B cell (primary cell): ENCODE measurements at regions of chr5 and their contacts with region 1.

Region 1: DNA sequence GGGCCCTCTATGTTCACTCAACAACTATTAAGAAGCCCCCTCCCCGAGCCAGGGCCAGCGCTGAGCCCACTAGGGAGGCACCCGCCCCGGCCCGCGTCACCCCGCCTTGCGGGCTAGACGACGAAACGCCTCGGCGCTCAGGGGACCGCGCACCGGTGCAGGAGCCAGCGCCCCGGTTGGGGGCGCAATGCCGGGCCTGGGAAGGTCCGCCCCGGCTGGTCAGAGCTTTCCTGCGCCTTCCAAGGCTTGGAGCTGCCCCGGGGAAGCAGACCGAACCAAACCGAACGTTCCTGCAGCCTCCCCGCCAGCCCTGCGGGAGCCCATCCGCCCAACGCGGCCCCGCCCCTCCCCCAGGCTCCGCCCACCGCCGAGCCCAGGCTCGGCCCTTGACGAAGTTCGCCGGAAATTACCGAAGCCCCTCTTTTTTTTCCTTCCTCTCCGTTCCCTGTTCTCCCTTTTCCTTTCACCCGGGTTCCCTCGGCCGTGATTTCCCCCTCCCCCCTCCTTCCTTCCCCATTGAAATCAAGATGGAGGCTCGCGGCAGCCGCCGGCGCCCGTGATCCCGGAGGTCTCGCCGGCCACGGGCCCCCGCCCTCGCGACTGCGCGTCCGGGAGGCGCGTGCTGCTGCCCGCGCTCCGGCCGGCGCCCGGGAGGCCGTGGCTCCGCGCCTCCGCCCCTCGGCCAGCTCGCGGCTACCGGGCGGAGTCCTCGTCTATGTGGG is at the start of gene TRIO:
- DNase-seq: peak; percentile 92
- ATAC-seq: peak; percentile 52
- H3K4me3 ChIP-seq: peak within 1 kb of the TSS; percentile 76 to 97 (median 93)
- H3K4me3 Mint-ChIP-seq: peak within 1 kb of the TSS; percentile 90
- H3K27ac ChIP-seq: peak within 1 kb of the TSS; percentile 92 to 95
- H3K27ac Mint-ChIP-seq: peak within 1 kb of the TSS; percentile 97
- H3K4me1 ChIP-seq: peaks cover 32 to 36% of the 10 kb centered on the region in 2 donors
- H3K4me1 Mint-ChIP-seq: peaks cover 33% of the 10 kb centered on the region
- H3K27me3 ChIP-seq: peaks cover 0 to 7% (median 1%) of the 10 kb centered on the region in 4 experiments
- H3K27me3 Mint-ChIP-seq: peaks cover 7% of the 10 kb centered on the region
- CTCF ChIP-seq: peak; percentile 75
- total RNA-seq, gene TRIO: 479 and 534 TPM in 2 replicates

Region 2: GRCh38 chr5:14054111-14054854 is 88.7 kb before region 1 on chr5:
- CTCF ChIA-PET with region 1: no interaction called
- POLR2A ChIA-PET with region 1: no interaction called
- intact Hi-C with region 1: no loop called
- DNase-seq: no peak
- ATAC-seq: no peak
- H3K4me3 ChIP-seq: no peak overlapping the region
- H3K4me3 Mint-ChIP-seq: no peak overlapping the region
- H3K27ac ChIP-seq: no peak overlapping the region
- H3K27ac Mint-ChIP-seq: no peak overlapping the region
- H3K4me1 ChIP-seq: no peaks in the 10 kb centered on the region
- H3K4me1 Mint-ChIP-seq: no peaks in the 10 kb centered on the region
- H3K27me3 ChIP-seq: peaks cover 0 to 16% (median 2%) of the 10 kb centered on the region in 4 experiments
- H3K27me3 Mint-ChIP-seq: peaks cover 17% of the 10 kb centered on the region
- CTCF ChIP-seq: no peak

Region 3: DNA sequence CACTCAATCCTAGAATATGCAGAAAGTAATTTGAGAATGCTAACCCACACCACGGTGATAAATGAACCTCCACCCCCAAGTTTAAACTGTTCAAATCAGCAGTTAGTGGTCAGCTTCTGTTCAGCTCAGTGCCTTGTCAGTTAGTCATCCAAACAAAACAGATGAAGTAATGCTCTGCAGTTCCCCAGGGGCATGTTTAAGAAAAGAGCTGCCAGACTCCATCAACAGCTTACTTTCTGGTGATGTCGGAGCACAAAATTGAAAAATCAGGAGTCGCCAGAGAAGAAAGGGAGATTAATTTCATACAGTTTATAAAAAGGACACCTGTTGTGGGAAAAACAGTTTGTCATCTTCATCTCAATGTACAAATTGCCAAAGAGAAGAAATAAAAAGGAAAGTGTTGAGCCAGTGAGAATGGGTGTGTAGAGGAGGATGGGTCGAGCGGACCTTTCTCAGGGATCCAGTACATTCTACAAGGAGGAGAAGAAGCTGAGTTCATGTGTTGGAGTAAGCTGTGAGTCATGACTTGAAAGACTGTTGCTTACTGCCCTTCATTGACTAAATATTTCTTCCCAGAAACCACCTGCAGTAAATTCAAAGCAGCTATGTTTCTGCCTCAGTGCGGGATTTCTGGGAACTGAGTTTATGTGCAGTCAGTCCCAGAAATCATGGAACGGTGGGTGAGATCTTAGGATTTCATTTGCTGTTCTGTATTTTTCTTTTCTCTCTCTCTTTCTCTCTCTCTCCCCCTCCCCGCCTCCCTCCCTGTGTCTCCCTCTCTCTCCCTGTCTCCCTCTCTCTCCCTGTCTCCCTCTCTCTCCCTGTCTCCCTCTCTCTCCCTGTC is 13.9 kb after region 1 on chr5:
- CTCF ChIA-PET with region 1: interaction called, 12 read pairs
- POLR2A ChIA-PET with region 1: interaction called, 53 read pairs
- intact Hi-C with region 1: loop called (anchors 1 kb)
- DNase-seq: peak; percentile 48
- ATAC-seq: peak; percentile 60
- H3K4me3 ChIP-seq: peak overlapping the region in 1 of 5 experiments; percentile 49
- H3K4me3 Mint-ChIP-seq: no peak overlapping the region
- H3K27ac ChIP-seq: peak overlapping the region; percentile 83 to 91
- H3K27ac Mint-ChIP-seq: no peak overlapping the region
- H3K4me1 ChIP-seq: peaks cover 53 to 78% of the 10 kb centered on the region in 2 donors
- H3K4me1 Mint-ChIP-seq: peaks cover 44% of the 10 kb centered on the region
- H3K27me3 ChIP-seq: no peaks in the 10 kb centered on the region
- H3K27me3 Mint-ChIP-seq: no peaks in the 10 kb centered on the region
- CTCF ChIP-seq: no peak

Region 4: DNA sequence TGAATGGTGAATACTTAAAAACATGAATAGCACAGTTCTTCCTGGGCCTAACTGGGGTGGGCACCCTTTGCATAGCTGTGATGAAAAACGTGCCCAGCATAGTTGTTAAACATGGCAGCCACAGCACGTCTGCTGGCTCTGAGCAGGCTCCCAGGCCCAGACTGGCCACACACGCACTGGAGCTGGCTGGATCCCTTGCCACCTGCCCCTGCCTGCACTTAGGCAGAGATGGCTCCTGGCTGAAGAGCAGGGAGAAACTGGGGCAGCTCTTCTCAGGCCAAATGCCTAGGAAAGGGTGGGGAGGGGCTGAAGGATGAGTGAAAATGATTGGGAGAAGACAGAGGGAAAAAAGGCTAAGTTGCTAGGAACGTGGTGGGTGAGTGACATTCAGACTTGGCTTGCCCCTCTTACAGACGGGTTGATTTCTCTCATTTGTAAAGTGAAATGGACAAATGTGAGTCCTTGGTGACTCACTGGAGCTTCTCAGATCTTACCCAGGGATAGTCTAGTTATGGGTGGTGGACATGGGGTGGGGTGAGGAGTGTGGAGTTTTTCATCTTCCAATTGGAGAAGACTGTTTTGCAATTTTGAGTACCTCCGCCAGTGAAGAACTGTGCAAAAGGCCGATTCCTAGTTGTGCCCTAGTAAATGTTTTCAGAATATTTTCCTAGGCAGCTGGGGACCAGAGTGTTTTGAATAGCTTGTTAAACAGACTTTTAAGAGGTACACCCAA is 42.5 kb after region 1 on chr5:
- CTCF ChIA-PET with region 1: interaction called, 3 read pairs
- POLR2A ChIA-PET with region 1: no interaction called
- intact Hi-C with region 1: loop called (anchors 5 kb)
- DNase-seq: no peak
- ATAC-seq: no peak
- H3K4me3 ChIP-seq: no peak overlapping the region
- H3K4me3 Mint-ChIP-seq: peak overlapping the region; percentile 32
- H3K27ac ChIP-seq: no peak overlapping the region
- H3K27ac Mint-ChIP-seq: peak overlapping the region; percentile 47
- H3K4me1 ChIP-seq: peaks cover 25 to 31% of the 10 kb centered on the region in 2 donors
- H3K4me1 Mint-ChIP-seq: peaks cover 86% of the 10 kb centered on the region
- H3K27me3 ChIP-seq: no peaks in the 10 kb centered on the region
- H3K27me3 Mint-ChIP-seq: no peaks in the 10 kb centered on the region
- CTCF ChIP-seq: no peak

Region 5: DNA sequence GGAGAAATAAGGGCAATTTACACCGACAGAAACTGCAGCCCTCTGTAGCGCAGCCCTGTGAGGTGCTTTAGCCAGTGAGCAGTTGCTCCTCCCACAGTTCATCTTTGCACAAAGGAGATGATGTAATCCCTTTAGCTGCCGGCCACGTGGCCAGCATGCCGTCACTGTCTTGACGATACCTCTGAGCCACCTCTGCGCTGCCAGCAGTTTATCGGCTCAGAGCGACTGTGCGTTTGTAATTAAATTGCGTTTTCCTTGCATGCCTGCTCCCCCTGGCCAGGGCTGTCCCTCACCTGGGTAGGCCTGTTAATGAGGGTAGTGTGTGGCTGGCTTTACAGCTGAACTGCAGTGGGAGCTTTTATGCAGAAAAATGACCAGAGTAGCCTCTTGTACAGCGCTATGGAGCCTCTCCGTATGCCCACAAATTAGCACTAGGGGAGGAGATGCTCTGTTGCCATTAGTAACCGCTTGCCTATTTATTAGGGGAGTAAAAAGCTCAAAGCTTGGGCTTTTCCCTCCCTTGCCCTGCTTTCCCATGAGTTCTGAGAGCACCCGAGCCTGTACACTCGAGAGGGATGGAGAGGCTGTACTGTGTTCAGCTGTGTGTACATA is 107.2 kb after region 1 on chr5:
- CTCF ChIA-PET with region 1: interaction called, 25 read pairs
- POLR2A ChIA-PET with region 1: interaction called, 3 read pairs
- intact Hi-C with region 1: loop called (anchors 2 kb)
- DNase-seq: peak; percentile 35
- ATAC-seq: peak; percentile 15
- H3K4me3 ChIP-seq: no peak overlapping the region
- H3K4me3 Mint-ChIP-seq: peak overlapping the region; percentile 68
- H3K27ac ChIP-seq: peak overlapping the region; percentile 71 to 75
- H3K27ac Mint-ChIP-seq: peak overlapping the region; percentile 91
- H3K4me1 ChIP-seq: peaks cover 37 to 40% of the 10 kb centered on the region in 2 donors
- H3K4me1 Mint-ChIP-seq: peaks cover 83% of the 10 kb centered on the region
- H3K27me3 ChIP-seq: no peaks in the 10 kb centered on the region
- H3K27me3 Mint-ChIP-seq: no peaks in the 10 kb centered on the region
- CTCF ChIP-seq: no peak

Region 6: GRCh38 chr5:14270209-14270702 is 127.3 kb after region 1 on chr5:
- CTCF ChIA-PET with region 1: interaction called, 64 read pairs
- POLR2A ChIA-PET with region 1: interaction called, 8 read pairs
- intact Hi-C with region 1: loop called (anchors 1 kb)
- DNase-seq: peak; percentile 70
- ATAC-seq: peak; percentile 65
- H3K4me3 ChIP-seq: no peak overlapping the region
- H3K4me3 Mint-ChIP-seq: no peak overlapping the region
- H3K27ac ChIP-seq: no peak overlapping the region
- H3K27ac Mint-ChIP-seq: no peak overlapping the region
- H3K4me1 ChIP-seq: peaks cover 7 to 8% of the 10 kb centered on the region in 2 donors
- H3K4me1 Mint-ChIP-seq: peaks cover 62% of the 10 kb centered on the region
- H3K27me3 ChIP-seq: no peaks in the 10 kb centered on the region
- H3K27me3 Mint-ChIP-seq: no peaks in the 10 kb centered on the region
- CTCF ChIP-seq: peak; percentile 87

Region 7: DNA sequence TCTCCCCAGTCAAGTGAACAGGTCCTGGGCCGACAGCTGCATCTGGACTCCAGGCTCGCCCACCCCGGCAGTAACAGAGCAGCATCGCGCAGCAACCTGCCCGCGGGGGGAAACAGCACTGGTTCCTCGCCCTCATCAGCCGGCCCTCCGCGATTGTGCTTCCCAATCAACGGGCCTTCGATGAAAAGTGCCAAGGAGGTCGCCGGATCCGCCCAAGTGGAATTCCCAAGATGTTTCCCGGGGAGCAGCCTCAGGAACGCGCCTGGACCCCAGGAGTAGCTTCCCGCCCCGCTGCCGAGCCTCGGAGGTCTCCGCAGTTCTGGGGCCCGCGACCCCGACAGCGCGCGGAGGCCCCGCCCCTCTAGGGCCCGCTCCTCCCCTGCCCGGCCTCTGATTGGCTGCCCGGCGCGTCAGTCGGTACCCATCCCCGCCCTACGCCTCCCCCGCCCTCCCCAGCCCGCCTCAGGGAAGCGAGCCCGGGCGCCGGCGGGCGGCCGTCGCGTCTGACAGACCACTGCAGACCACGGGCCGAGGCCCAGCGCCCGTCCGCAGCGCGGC is 438.4 kb after region 1 on chr5 and contains the start of gene OTULINL:
- CTCF ChIA-PET with region 1: no interaction called
- POLR2A ChIA-PET with region 1: no interaction called
- intact Hi-C with region 1: loop called (anchors 10 kb)
- DNase-seq: peak; percentile 85
- ATAC-seq: peak; percentile 97
- H3K4me3 ChIP-seq: peak within 1 kb of the TSS; percentile 31 to 70 (median 62)
- H3K4me3 Mint-ChIP-seq: peak within 1 kb of the TSS; percentile 74
- H3K27ac ChIP-seq: no peak within 1 kb of the TSS
- H3K27ac Mint-ChIP-seq: no peak within 1 kb of the TSS
- H3K4me1 ChIP-seq: peaks cover 9 to 14% of the 10 kb centered on the region in 2 donors
- H3K4me1 Mint-ChIP-seq: peaks cover 5% of the 10 kb centered on the region
- H3K27me3 ChIP-seq: peaks cover 0 to 44% (median 18%) of the 10 kb centered on the region in 4 experiments
- H3K27me3 Mint-ChIP-seq: peaks cover 39% of the 10 kb centered on the region
- CTCF ChIP-seq: no peak
- total RNA-seq, gene OTULINL: 0.80 and 0.81 TPM in 2 replicates